ENCODE measurements at regions of chr18 and their contacts with region 1.

Region 1: DNA sequence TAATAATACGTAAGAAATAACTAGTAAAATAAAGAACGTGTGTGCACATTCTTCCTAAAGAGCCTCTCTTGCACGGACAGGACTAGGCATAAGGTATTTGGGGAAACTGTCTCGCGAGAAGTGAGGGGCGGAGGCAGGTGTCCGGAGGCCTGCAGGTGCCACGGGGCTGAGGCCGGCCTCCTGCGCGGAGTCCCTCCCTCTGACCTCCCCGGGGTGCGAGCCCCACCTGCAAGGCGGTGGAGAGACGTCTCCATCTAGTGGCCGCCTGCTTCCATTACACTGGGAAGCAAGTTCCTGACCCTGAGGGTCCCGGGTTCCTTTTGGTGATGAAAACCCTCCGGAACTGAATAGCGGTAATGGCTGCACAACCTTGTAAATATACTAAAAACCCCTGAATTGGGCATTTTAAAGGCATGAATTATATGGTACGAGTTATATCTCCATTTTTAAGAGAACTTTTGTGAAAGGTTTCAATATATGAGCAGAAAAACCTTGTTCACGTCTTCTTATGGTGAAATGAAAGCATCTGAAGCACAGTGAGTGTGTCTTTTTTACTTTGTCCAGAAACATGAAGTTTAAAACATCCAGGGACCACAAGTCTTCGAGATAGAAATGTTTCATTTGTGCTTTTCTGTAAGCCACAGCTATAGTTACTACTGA is 35.5 kb upstream of the CTDP1 start:
- DNase-seq: peak; percentile 54 to 66
- ATAC-seq: peak; percentile 67 to 88 (median 84)
- H3K4me3 ChIP-seq: peak overlapping the region in 2 of 10 donors; percentile 5 to 10
- H3K27ac ChIP-seq: peak overlapping the region in 2 of 10 donors; percentile 8 to 49
- H3K4me1 ChIP-seq: peaks cover 0 to 19% (median 0%) of the 10 kb centered on the region in 9 donors
- H3K27me3 ChIP-seq: peaks cover 0 to 29% (median 9%) of the 10 kb centered on the region in 7 donors
- CTCF ChIP-seq: peak; percentile 93 to 100 (median 98)

Region 2: DNA sequence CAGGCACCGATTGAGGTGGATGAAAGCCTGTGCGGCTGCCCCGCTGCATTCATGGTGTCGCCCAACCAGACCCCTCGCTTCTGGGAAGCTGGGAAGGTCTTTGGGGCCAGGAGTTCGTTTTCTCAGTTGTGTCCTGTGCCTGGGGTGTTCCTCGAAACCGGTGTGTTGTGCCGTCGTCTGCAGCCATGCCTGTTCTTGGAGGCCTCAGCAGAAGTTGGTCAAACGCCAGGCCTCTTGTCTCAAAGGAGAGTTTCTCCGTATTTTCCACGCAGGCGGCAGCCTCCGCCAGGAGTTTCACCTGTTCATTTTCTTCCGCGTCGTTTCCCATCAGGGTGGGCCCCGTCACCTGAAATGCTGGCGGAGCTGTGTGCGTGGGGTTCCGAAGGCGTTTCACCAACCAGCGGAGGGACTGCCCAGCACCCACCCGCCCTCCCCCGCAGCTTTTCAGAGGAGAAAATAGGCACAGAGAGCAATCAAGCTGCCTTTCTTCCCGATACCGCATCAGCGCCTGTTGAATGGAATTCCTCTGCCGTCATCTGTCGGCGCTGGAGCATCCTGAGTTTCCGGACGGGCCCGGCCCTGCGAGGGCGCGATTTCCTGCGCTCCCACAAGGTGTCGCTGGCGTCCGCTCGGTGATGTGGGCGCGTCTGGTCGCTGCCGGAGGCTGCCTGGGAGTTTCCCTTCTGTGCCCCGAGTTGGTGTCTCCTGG is 265.4 kb before region 1 on chr18:
- intact Hi-C with region 1: loop called (anchors 1 to 5 kb)
- DNase-seq: peak; percentile 79 to 83
- ATAC-seq: peak; percentile 64 to 90 (median 82)
- H3K4me3 ChIP-seq: no peak overlapping the region
- H3K27ac ChIP-seq: no peak overlapping the region
- H3K4me1 ChIP-seq: peaks cover 0 to 9% (median 4%) of the 10 kb centered on the region in 9 donors
- H3K27me3 ChIP-seq: no peaks in the 10 kb centered on the region
- CTCF ChIP-seq: peak in 8 of 9 donors; percentile 94 to 99 (median 97)

Region 3: GRCh38 chr18:79588636-79589481 is 55.3 kb before region 1 on chr18:
- intact Hi-C with region 1: loop called in 1 of 10 experiments (anchors 10 kb)
- DNase-seq: peak; percentile 84 to 86
- ATAC-seq: peak; percentile 87 to 92 (median 89)
- H3K4me3 ChIP-seq: no peak overlapping the region
- H3K27ac ChIP-seq: peak overlapping the region in 9 of 10 donors; percentile 39 to 83 (median 68)
- H3K4me1 ChIP-seq: peaks cover 0 to 40% (median 18%) of the 10 kb centered on the region in 9 donors
- H3K27me3 ChIP-seq: peaks cover 0 to 14% (median 4%) of the 10 kb centered on the region in 7 donors
- CTCF ChIP-seq: peak in 1 of 9 donors; percentile 12